Psoas muscle (tissue), 8 donors: ENCODE measurements at regions of chr4 and their contacts with region 1.

Region 1: GRCh38 chr4:123661080-123661737 is 264.6 kb downstream of the SPRY1 start:
- DNase-seq: no peak
- ATAC-seq: peak in 1 of 4 donors; percentile 56
- H3K4me3 ChIP-seq: no peak overlapping the region
- H3K27ac ChIP-seq: no peak overlapping the region
- H3K4me1 ChIP-seq: peaks cover 6% of the 10 kb centered on the region
- H3K27me3 ChIP-seq: no peaks in the 10 kb centered on the region
- CTCF ChIP-seq: peak; percentile 64

Region 2: DNA sequence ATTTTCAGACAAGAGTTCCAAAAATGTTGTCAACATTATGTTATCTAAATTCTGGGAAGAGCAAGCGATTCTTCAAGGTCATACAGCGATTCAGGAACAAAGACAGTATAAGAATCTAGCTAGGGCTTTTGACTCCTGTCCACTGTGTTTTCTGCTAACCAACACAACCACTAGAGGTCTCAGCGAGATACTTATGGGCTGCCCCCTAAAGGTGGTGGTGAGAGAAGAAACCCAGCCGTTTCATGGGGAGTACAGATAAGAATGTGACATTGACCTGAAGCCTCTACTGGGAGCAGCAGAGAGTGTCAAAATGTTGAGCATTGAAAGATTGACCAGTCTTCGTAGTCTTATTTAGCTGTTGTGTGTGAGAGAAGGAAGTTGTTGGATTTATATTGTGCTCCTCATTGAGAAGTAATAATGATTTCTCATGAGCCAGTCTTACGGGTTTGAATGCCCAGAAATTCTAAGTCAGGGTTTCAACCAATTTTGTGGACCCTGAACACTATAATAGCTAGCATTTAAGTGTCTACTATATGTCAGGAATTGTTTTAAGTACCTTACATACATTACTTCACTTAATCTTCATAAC is 96.4 kb before region 1 on chr4:
- intact Hi-C with region 1: loop called in 1 of 2 experiments (anchors 5 kb)
- DNase-seq: no peak
- ATAC-seq: peak; percentile 89 to 98 (median 94)
- H3K4me3 ChIP-seq: no peak overlapping the region
- H3K27ac ChIP-seq: no peak overlapping the region
- H3K4me1 ChIP-seq: no peaks in the 10 kb centered on the region
- H3K27me3 ChIP-seq: no peaks in the 10 kb centered on the region
- CTCF ChIP-seq: peak; percentile 80

Region 3: GRCh38 chr4:123671633-123672404 is 10.6 kb after region 1 on chr4:
- intact Hi-C with region 1: no loop called
- DNase-seq: no peak
- ATAC-seq: no peak
- H3K4me3 ChIP-seq: peak overlapping the region; percentile 12
- H3K27ac ChIP-seq: no peak overlapping the region
- H3K4me1 ChIP-seq: peaks cover 14% of the 10 kb centered on the region
- H3K27me3 ChIP-seq: no peaks in the 10 kb centered on the region
- CTCF ChIP-seq: no peak